Gastrocnemius medialis (tissue), 4 donors: ENCODE measurements at regions of chr19 and their contacts with region 1.

Region 1: GRCh38 chr19:39445265-39446111 is at the start of gene SUPT5H:
- DNase-seq: peak; percentile 96 to 97
- ATAC-seq: peak; percentile 96 to 99
- H3K4me3 ChIP-seq: peak within 1 kb of the TSS; percentile 74 to 99 (median 86)
- H3K27ac ChIP-seq: peak within 1 kb of the TSS; percentile 89 to 98 (median 94)
- H3K4me1 ChIP-seq: peaks cover 14 to 27% of the 10 kb centered on the region in 2 donors
- H3K27me3 ChIP-seq: no peaks in the 10 kb centered on the region
- CTCF ChIP-seq: no peak
- POLR2A ChIP-seq: peak; percentile 89 to 95
- total RNA-seq, gene SUPT5H: 60.7 to 148 (median 108) TPM

Region 2: DNA sequence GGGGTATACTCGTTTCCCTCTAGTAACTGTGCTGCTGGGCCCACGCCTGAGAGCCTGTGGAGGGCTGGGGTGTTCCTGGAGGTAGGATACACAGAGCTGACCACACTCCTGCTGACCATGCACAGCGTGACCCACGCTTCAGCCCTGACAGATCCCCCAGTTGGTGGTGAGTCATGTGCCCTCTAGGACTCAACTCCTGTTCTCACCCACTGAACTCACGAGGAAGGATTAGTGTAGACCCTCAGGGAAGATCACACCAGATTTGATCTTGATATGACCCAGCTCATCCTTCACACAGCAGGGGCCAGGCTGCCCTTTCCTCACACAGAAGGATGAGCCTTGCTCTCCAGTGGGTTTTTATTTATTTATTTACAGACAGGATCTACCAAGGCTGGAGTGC is 374.6 kb before region 1 on chr19:
- in situ Hi-C with region 1: no loop called
- intact Hi-C with region 1: no loop called
- DNase-seq: no peak
- ATAC-seq: no peak
- H3K4me3 ChIP-seq: no peak overlapping the region
- H3K27ac ChIP-seq: no peak overlapping the region
- H3K4me1 ChIP-seq: no peaks in the 10 kb centered on the region
- H3K27me3 ChIP-seq: no peaks in the 10 kb centered on the region
- CTCF ChIP-seq: no peak
- POLR2A ChIP-seq: no peak

Region 3: DNA sequence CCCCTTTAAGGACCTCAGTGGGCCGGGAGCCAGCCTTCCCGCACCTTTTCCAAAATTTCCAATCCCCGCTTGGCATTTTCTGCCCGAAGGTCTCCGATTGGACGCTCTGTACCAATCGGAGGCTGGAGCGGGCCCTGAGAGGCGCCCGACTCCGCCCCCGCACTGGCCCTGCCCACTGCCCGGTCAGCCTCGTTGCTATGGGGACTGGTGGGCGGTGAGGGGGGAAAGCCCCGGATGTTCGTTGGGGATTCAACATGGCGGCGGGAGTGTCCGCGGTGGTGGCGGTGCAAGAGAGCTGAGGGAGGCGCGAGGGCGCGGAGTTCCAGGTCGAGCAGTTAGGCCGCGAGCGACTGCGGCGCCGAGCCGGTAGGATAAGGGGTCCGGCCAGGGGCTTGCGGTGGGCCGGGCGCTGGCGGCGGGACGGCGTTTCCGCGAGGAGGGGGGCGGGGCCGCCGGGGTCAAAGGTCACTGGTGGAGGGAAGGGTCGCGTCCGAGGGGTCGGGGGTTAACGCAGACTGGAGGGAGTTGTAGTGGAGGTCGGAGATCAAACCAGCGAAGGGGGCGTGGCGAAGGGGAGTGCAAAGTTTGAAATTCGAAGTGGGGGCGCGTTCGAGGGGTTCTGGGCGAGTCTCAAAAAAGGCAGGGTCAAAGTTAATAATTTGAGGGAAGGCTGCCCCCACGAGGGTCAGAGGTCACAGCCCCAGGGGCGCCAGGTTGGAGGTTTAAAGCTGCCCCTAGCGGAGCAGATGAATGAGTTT is 319.8 kb before region 1 on chr19 and contains the start of gene PAK4:
- in situ Hi-C with region 1: no loop called
- intact Hi-C with region 1: no loop called
- DNase-seq: peak; percentile 97 to 98
- ATAC-seq: peak; percentile 98
- H3K4me3 ChIP-seq: peak within 1 kb of the TSS; percentile 73 to 96 (median 82)
- H3K27ac ChIP-seq: peak within 1 kb of the TSS; percentile 76 to 90 (median 80)
- H3K4me1 ChIP-seq: peaks cover 13 to 29% of the 10 kb centered on the region in 2 donors
- H3K27me3 ChIP-seq: peaks cover 0 to 4% (median 3%) of the 10 kb centered on the region in 3 donors
- CTCF ChIP-seq: no peak
- POLR2A ChIP-seq: peak; percentile 30 to 47
- total RNA-seq, gene PAK4: 4.7 to 11.7 (median 8.3) TPM

Region 4: GRCh38 chr19:39282021-39282420 is 163.5 kb before region 1 on chr19:
- in situ Hi-C with region 1: no loop called
- intact Hi-C with region 1: no loop called
- DNase-seq: no peak
- ATAC-seq: no peak
- H3K4me3 ChIP-seq: no peak overlapping the region
- H3K27ac ChIP-seq: no peak overlapping the region
- H3K4me1 ChIP-seq: no peaks in the 10 kb centered on the region
- H3K27me3 ChIP-seq: peaks cover 0 to 7% (median 0%) of the 10 kb centered on the region in 3 donors
- CTCF ChIP-seq: no peak
- POLR2A ChIP-seq: no peak

Region 5: GRCh38 chr19:39341719-39342604 is 103.5 kb before region 1 on chr19 and contains the start of gene SAMD4B:
- in situ Hi-C with region 1: no loop called
- intact Hi-C with region 1: loop called (anchors 1 kb)
- DNase-seq: peak; percentile 98
- ATAC-seq: peak; percentile 91
- H3K4me3 ChIP-seq: peak within 1 kb of the TSS; percentile 84 to 91 (median 86)
- H3K27ac ChIP-seq: peak within 1 kb of the TSS; percentile 84 to 92 (median 89)
- H3K4me1 ChIP-seq: peaks cover 38 to 55% of the 10 kb centered on the region in 2 donors
- H3K27me3 ChIP-seq: no peaks in the 10 kb centered on the region
- CTCF ChIP-seq: peak; percentile 73 to 88 (median 83)
- POLR2A ChIP-seq: peak; percentile 89 to 97
- total RNA-seq, gene SAMD4B: 30.9 to 63.7 (median 59.2) TPM

Region 6: DNA sequence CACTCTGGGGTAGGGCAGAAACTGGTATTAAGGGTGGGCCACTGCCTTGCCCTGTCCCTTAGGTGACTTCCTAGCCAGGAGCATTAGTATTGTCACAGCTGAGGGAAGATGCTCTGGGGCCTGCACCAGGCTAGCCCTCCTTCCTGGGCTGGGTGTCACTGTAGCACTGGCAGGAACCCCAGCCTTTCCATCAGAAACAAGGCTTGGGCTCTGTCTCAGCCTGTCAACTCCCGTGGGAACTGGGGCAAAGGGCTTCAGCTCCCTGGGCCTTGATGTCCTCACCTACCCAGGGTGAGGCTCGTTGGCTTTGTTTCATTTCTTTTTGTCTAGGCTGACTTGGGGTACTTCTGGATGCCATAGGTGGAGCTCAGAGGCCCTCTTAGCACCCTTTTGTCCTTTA is 72.5 kb before region 1 on chr19:
- in situ Hi-C with region 1: no loop called
- intact Hi-C with region 1: no loop called
- DNase-seq: no peak
- ATAC-seq: peak; percentile 19 to 21
- H3K4me3 ChIP-seq: peak overlapping the region in 2 of 4 donors; percentile 4 to 14
- H3K27ac ChIP-seq: peak overlapping the region; percentile 78 to 91 (median 86)
- H3K4me1 ChIP-seq: peaks cover 19 to 21% of the 10 kb centered on the region in 2 donors
- H3K27me3 ChIP-seq: no peaks in the 10 kb centered on the region
- CTCF ChIP-seq: no peak
- POLR2A ChIP-seq: no peak

Region 7: GRCh38 chr19:39397360-39398296 is 47.9 kb before region 1 on chr19:
- in situ Hi-C with region 1: no loop called
- intact Hi-C with region 1: loop called (anchors 1 kb)
- DNase-seq: peak; percentile 66 to 92
- ATAC-seq: peak; percentile 75 to 80
- H3K4me3 ChIP-seq: peak overlapping the region in 2 of 4 donors; percentile 5 to 37
- H3K27ac ChIP-seq: peak overlapping the region; percentile 90 to 100 (median 98)
- H3K4me1 ChIP-seq: peaks cover 22 to 28% of the 10 kb centered on the region in 2 donors
- H3K27me3 ChIP-seq: no peaks in the 10 kb centered on the region
- CTCF ChIP-seq: peak; percentile 97 to 100 (median 99)
- POLR2A ChIP-seq: peak in 1 of 2 donors; percentile 13

Region 8: DNA sequence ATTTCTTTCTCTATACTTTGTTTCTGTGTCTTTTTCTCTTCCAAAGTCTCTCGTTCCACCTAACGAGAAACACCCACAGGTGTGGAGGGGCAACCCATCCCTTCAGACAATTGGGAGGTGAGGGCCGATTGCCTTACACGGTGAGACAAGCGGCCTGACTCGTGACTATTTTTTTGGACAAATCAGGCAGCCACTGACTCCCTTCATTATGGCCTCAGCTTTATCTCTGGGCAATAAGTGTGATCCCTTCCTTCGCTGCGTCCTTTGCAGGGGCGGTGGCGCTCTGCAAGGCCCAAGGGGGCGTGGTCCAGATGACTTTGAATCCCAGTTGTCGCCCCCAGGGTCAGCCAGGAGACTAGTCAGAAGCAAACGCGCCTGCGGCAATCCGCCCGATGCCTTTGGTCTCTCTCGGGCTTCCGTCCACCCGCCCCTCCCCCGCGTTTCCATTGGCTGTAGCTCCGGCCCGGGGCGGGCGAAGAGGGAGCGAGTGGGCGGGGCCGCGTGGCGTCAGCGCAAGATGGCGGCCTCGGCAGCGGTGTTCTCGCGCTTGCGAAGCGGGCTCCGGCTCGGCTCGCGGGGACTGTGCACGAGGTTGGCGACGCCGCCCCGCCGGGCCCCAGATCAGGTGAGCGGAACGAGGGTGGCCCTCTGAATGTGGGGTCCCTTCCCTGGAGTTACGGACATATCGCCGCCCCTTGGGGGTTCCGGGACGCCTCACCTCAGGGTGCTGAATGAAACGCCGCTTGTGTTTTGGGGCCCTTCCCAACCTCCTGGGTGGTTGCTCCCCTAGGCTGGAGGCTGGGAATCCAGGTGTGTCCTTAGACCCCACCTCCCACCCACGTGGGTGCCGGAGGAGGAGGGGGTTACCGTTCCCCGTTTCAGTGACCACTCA is 35.1 kb after region 1 on chr19 and contains the start of gene TIMM50:
- in situ Hi-C with region 1: no loop called
- intact Hi-C with region 1: loop called (anchors 1 kb)
- DNase-seq: peak; percentile 91 to 97
- ATAC-seq: peak; percentile 97 to 98
- H3K4me3 ChIP-seq: peak within 1 kb of the TSS; percentile 92 to 100 (median 99)
- H3K27ac ChIP-seq: peak within 1 kb of the TSS; percentile 88 to 95 (median 92)
- H3K4me1 ChIP-seq: peaks cover 11% of the 10 kb centered on the region in 2 donors
- H3K27me3 ChIP-seq: no peaks in the 10 kb centered on the region
- CTCF ChIP-seq: no peak
- POLR2A ChIP-seq: peak; percentile 44 to 71
- total RNA-seq, gene TIMM50: 66.9 to 97.6 (median 85.6) TPM

Region 9: GRCh38 chr19:39846176-39846677 is 400.7 kb after region 1 on chr19 and contains the start of gene FBL:
- in situ Hi-C with region 1: loop called in 2 of 4 experiments (anchors 25 kb)
- intact Hi-C with region 1: no loop called
- DNase-seq: peak; percentile 86 to 93
- ATAC-seq: peak; percentile 88 to 91
- H3K4me3 ChIP-seq: peak within 1 kb of the TSS; percentile 78 to 99 (median 88)
- H3K27ac ChIP-seq: peak within 1 kb of the TSS; percentile 93 to 96 (median 96)
- H3K4me1 ChIP-seq: peaks cover 38 to 50% of the 10 kb centered on the region in 2 donors
- H3K27me3 ChIP-seq: no peaks in the 10 kb centered on the region
- CTCF ChIP-seq: no peak
- POLR2A ChIP-seq: peak; percentile 72 to 75
- total RNA-seq, gene FBL: 40.4 to 79.4 (median 67.0) TPM